ENCODE measurements at regions of chr7 and their contacts with region 1.

Region 1: DNA sequence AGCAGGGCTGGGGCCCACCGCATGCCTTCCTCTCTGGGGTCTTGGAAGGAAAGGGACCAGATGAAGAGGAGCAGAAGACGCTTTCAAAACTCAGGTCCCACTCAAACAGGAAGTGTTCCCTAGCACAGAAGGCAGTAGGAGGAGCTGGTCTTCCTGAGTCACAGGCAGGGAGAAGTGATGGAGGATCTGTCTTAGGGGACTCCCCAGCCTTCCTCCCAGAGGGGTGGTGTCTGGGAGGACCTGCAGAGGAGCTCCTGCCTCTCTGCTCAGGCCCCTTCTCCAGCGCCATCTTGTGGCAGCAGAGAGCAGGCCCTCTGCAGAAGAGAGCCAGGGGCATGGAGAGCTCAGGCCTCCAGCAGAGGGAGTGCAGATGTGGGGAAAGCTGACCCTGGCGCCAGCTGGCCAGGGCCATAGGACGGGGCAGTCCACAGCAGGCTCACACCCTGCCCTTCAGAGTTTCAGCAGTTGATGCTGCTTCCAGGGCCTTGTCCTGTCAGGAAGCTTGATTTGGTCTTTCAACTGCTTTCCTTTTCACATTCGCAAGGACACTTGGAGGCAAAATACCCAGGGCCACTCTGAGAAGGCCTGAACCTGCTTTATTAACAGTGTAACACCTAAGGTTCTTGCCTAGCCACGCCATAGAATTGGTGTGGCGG is 62.2 kb upstream of the TARP start:
- DNase-seq: peak; percentile 89 to 92 (median 91)
- H3K4me3 ChIP-seq: peak overlapping the region in 4 of 7 experiments; percentile 17 to 65 (median 40)
- H3K27ac ChIP-seq: peak overlapping the region in 1 of 2 experiments; percentile 77
- H3K4me1 ChIP-seq: peaks cover 30 to 59% (median 44%) of the 10 kb centered on the region in 4 experiments
- H3K27me3 ChIP-seq: no peaks in the 10 kb centered on the region

Region 2: GRCh38 chr7:38222481-38223096 is 113.0 kb before region 1 on chr7:
- CTCF ChIA-PET with region 1: interaction called, 72 read pairs
- POLR2A ChIA-PET with region 1: no interaction called
- DNase-seq: peak; percentile 66 to 78 (median 71)
- H3K4me3 ChIP-seq: no peak overlapping the region
- H3K27ac ChIP-seq: peak overlapping the region in 1 of 2 experiments; percentile 52
- H3K4me1 ChIP-seq: peaks cover 0 to 16% (median 6%) of the 10 kb centered on the region in 4 experiments
- H3K27me3 ChIP-seq: no peaks in the 10 kb centered on the region

Region 3: GRCh38 chr7:38232502-38233366 is 102.9 kb before region 1 on chr7:
- CTCF ChIA-PET with region 1: interaction called, 11 read pairs
- POLR2A ChIA-PET with region 1: interaction called, 4 read pairs
- DNase-seq: peak; percentile 70 to 95 (median 92)
- H3K4me3 ChIP-seq: peak overlapping the region in 3 of 7 experiments; percentile 11 to 48 (median 33)
- H3K27ac ChIP-seq: peak overlapping the region; percentile 13 to 16
- H3K4me1 ChIP-seq: peaks cover 24 to 67% (median 32%) of the 10 kb centered on the region in 4 experiments
- H3K27me3 ChIP-seq: no peaks in the 10 kb centered on the region

Region 4: DNA sequence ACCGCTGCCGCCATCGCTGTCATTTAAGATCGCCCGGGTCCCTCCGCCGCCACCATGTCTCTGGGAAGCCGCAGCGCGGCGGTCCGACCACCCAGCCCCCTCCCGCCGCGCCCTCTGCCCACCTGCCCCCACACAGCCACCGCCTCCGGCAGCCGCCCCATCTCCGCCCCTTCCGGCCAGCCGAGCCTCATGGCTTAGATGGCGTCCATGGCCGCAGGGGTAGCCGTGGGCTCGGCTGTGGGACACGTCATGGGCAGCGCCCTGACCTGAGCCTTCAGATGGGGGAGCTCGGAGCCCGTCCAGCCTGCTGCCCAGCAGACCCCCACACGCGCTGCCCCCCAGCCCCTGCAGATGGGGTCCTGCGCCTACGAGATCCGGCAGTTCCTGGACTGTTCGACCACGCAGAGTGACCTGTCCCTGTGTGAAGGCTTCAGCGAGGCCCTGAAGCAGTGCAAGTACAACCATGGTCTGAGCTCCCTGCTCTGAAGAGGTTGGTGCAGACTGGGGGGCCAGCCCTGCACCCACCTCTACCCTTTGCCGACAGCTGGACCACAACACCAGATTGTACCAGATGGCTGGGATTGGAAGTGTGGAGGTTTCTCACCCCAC is 24.2 kb before region 1 on chr7:
- CTCF ChIA-PET with region 1: interaction called, 35 read pairs
- POLR2A ChIA-PET with region 1: interaction called, 3 read pairs
- DNase-seq: peak in 2 of 3 donors; percentile 30 to 60
- H3K4me3 ChIP-seq: peak overlapping the region; percentile 17 to 82 (median 72)
- H3K27ac ChIP-seq: peak overlapping the region; percentile 62 to 75
- H3K4me1 ChIP-seq: peaks cover 27 to 75% (median 38%) of the 10 kb centered on the region in 4 experiments
- H3K27me3 ChIP-seq: no peaks in the 10 kb centered on the region

Region 5: DNA sequence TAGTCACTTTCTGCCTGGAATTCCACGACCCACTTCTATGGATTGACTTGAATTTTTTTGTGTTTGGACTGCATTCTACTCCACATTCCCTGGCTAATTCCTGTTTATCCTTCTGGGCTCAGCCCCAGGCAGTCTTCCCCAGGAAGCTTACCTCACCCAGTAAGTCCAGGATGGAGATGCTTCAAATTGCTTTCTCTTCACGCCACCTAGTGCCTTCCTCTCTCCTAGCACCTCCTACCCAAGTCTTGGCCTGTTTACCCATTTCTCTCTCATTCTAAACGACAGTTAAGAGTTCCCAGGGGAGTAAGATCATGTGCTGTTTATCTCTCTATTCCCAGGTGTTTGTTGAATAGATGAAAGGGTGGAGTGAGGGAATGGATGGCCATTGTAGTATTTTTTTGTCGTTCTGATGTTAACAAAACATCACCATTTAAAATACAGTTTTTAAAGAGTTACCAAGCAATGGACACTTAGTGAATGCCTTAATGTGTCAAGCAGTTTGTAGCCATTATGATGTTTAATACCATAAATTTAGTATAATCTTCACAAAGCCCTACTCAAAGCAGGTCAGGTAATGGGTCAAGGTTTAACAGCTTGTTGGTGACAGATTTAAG is 16.7 kb before region 1 on chr7:
- CTCF ChIA-PET with region 1: interaction called, 90 read pairs
- POLR2A ChIA-PET with region 1: no interaction called
- DNase-seq: peak; percentile 60 to 63 (median 61)
- H3K4me3 ChIP-seq: no peak overlapping the region
- H3K27ac ChIP-seq: no peak overlapping the region
- H3K4me1 ChIP-seq: peaks cover 7 to 45% (median 24%) of the 10 kb centered on the region in 4 experiments
- H3K27me3 ChIP-seq: no peaks in the 10 kb centered on the region

Region 6: GRCh38 chr7:38360776-38361175 is 25.2 kb after region 1 on chr7:
- CTCF ChIA-PET with region 1: interaction called, 82 read pairs
- POLR2A ChIA-PET with region 1: no interaction called
- DNase-seq: peak in 2 of 3 donors; percentile 28 to 44
- H3K4me3 ChIP-seq: peak overlapping the region in 1 of 7 experiments; percentile 66
- H3K27ac ChIP-seq: no peak overlapping the region
- H3K4me1 ChIP-seq: peaks cover 6 to 60% (median 48%) of the 10 kb centered on the region in 4 experiments
- H3K27me3 ChIP-seq: no peaks in the 10 kb centered on the region

Region 7: DNA sequence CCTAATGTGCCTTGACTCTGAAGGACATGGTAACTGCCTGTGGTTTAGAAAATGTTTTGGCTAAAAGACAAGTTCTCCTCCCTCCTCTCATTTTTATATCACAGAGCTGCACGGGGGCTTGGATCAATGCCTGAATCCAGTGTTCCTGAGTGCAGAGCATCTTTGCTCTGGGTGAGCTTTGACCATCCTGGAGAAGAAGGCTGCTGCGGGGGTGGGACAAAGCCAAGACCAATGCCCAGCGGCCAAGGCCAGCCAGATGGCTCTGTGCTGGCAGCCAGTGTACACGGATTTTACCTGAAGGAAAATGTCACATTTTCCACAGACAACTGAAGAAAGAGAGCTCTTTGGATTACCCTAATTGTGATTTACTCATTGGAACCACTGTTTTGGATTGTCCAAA is 39.8 kb after region 1 on chr7:
- CTCF ChIA-PET with region 1: interaction called, 82 read pairs
- POLR2A ChIA-PET with region 1: no interaction called
- DNase-seq: no peak
- H3K4me3 ChIP-seq: no peak overlapping the region
- H3K27ac ChIP-seq: no peak overlapping the region
- H3K4me1 ChIP-seq: peaks cover 0 to 2% (median 0%) of the 10 kb centered on the region in 4 experiments
- H3K27me3 ChIP-seq: no peaks in the 10 kb centered on the region

Region 8: GRCh38 chr7:38451840-38452239 is 116.2 kb after region 1 on chr7:
- CTCF ChIA-PET with region 1: no interaction called
- POLR2A ChIA-PET with region 1: no interaction called
- DNase-seq: peak; percentile 8 to 9 (median 8)
- H3K4me3 ChIP-seq: no peak overlapping the region
- H3K27ac ChIP-seq: no peak overlapping the region
- H3K4me1 ChIP-seq: no peaks in the 10 kb centered on the region
- H3K27me3 ChIP-seq: no peaks in the 10 kb centered on the region

Region 9: DNA sequence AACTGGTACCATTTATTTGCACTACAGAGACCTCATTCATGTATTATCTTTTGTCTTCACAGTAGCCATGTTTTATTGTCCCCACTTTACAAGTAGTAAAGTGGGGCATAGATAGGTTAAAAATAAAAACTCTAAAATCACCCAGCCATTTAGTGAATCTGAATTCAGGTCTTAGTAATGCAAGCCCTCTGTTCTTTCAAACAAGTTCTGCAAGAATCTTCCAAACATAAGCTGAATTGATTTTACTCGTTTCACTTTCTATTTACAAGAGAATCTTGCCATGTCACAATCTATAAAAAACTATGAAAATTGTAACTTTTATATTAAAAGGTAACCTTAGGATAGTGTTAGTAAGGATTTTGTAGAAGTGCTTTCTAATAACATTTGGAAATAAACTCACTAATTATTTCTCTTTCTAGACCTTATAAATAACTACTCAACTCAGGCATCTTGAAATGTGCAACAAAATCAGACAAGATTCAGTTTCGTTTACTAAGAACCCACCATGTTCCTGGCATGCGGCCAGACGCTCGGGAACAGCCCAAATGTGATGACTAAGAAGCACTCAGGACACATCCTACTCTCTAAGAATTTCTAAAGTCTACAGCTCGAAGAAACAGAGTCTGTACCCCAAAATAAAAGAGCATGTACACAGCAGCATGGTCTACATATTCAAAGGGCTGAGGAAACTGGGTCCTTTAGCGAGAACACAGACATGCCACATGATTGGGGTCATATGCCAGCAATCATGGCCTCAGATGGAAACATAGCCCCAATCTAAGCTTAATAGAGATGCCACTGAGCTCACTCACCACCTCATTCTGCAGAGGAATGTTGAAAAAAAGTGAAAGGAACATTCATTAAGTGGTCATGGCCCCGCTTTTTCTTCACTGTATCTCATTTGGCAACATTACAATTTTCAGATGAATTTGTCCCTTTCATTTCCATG is 127.9 kb after region 1 on chr7:
- CTCF ChIA-PET with region 1: no interaction called
- POLR2A ChIA-PET with region 1: no interaction called
- DNase-seq: peak; percentile 39 to 86 (median 72)
- H3K4me3 ChIP-seq: peak overlapping the region in 1 of 7 experiments; percentile 32
- H3K27ac ChIP-seq: no peak overlapping the region
- H3K4me1 ChIP-seq: peaks cover 0 to 4% (median 1%) of the 10 kb centered on the region in 4 experiments
- H3K27me3 ChIP-seq: no peaks in the 10 kb centered on the region